Mammary epithelial cell (primary cell): ENCODE measurements at regions of chr12 and their contacts with region 1.

Region 1: DNA sequence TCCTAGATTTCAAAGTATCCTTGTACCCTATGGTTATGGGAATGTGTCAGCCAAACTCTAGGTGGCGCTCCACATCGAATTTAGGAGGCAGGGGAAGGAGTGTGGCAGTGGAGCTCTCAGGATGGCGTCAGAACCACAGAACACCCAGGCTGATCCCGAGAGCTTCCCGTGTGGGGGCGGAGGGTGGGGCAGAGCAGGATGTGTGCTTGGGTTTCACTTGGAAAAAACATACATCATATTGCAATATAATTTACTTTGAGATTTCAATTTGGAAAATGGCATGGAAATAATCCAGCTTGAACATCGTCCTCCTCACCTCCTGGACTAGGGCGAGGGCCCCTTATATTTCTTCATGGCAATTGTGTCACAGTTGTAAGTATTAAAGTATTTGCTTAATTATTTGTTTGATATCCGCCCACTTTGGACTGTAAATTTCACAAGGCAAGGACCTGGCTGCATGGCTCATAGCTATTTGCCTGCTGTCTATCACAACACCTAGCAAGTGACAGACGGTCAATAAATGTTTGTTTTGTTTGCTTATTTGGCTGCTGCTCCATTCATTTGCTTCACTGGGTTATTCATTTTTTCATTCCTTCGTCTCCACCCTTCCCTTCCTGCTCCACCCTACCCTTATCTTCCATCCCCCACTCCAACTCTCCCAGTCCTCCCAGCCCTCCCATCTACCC is 221.5 kb upstream of the HMGA2 start:
- DNase-seq: peak; percentile 94
- H3K4me3 ChIP-seq: peak overlapping the region; percentile 39 to 60 (median 43)
- H3K27ac ChIP-seq: peak overlapping the region; percentile 98
- H3K4me1 ChIP-seq: peaks cover 48% of the 10 kb centered on the region
- H3K27me3 ChIP-seq: no peaks in the 10 kb centered on the region
- CTCF ChIP-seq: peak; percentile 76 to 84

Region 2: GRCh38 chr12:65313719-65314317 is 288.9 kb before region 1 on chr12:
- CTCF ChIA-PET with region 1: no interaction called
- dilution Hi-C with region 1: no loop called
- in situ Hi-C with region 1: no loop called
- intact Hi-C with region 1: loop called (anchors 1 kb)
- DNase-seq: peak; percentile 19
- H3K4me3 ChIP-seq: no peak overlapping the region
- H3K27ac ChIP-seq: peak overlapping the region; percentile 2
- H3K4me1 ChIP-seq: peaks cover 3% of the 10 kb centered on the region
- H3K27me3 ChIP-seq: no peaks in the 10 kb centered on the region
- CTCF ChIP-seq: peak; percentile 59 to 67

Region 3: DNA sequence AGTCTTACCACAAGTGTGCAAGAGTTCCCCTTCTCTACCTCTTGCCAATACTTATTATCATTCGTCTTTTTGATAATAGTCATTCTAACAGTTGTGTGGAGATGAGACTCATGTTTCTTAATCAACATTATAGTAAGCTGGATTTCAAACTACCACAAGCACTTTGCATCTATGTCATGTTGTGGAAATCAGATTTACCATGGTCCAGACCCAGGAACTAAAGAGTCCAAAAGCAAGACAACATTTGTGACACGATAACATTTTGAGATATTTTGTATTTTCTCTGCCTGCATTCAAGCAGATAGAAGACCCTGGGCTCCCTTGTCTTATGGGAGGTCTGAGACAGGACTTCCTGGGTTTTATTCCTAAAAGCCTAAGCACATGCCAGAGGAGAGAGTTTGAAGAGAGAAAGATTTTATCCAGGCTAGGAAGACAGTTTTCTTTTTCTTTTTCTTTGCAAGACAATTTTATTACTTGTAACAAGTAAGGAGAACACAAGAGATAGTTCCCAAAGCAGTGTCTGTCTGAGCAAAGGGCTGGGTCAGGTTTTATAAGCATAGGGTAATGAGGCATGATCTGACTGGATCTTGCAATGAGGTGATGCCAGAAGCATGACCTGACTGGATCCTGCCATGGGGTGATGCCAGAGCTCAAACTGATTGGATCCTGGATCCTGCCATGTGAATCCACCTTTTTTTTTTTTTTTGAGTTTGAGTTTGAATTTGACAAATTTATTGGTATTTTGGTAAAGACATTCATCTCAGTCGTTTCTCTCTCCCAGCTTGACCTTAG is 41.0 kb after region 1 on chr12:
- CTCF ChIA-PET with region 1: interaction called, 5 read pairs
- dilution Hi-C with region 1: no loop called
- in situ Hi-C with region 1: no loop called
- intact Hi-C with region 1: loop called (anchors 1 kb)
- DNase-seq: peak; percentile 93
- H3K4me3 ChIP-seq: no peak overlapping the region
- H3K27ac ChIP-seq: peak overlapping the region; percentile 96
- H3K4me1 ChIP-seq: peaks cover 25% of the 10 kb centered on the region
- H3K27me3 ChIP-seq: no peaks in the 10 kb centered on the region
- CTCF ChIP-seq: no peak

Region 4: GRCh38 chr12:65673732-65674131 is 71.0 kb after region 1 on chr12:
- CTCF ChIA-PET with region 1: interaction called, 3 read pairs
- dilution Hi-C with region 1: loop called (anchors 10 kb)
- in situ Hi-C with region 1: loop called in 1 of 2 experiments (anchors 5 kb)
- intact Hi-C with region 1: loop called (anchors 1 kb)
- DNase-seq: no peak
- H3K4me3 ChIP-seq: no peak overlapping the region
- H3K27ac ChIP-seq: peak overlapping the region; percentile 98
- H3K4me1 ChIP-seq: peaks cover 55% of the 10 kb centered on the region
- H3K27me3 ChIP-seq: no peaks in the 10 kb centered on the region
- CTCF ChIP-seq: peak in 1 of 2 donors; percentile 46

Region 5: GRCh38 chr12:65740873-65741600 is 138.3 kb after region 1 on chr12:
- CTCF ChIA-PET with region 1: no interaction called
- dilution Hi-C with region 1: no loop called
- in situ Hi-C with region 1: no loop called
- intact Hi-C with region 1: loop called (anchors 2 kb)
- DNase-seq: peak; percentile 73
- H3K4me3 ChIP-seq: peak overlapping the region; percentile 54 to 90 (median 77)
- H3K27ac ChIP-seq: peak overlapping the region; percentile 49
- H3K4me1 ChIP-seq: peaks cover 14% of the 10 kb centered on the region
- H3K27me3 ChIP-seq: no peaks in the 10 kb centered on the region
- CTCF ChIP-seq: no peak

Region 6: DNA sequence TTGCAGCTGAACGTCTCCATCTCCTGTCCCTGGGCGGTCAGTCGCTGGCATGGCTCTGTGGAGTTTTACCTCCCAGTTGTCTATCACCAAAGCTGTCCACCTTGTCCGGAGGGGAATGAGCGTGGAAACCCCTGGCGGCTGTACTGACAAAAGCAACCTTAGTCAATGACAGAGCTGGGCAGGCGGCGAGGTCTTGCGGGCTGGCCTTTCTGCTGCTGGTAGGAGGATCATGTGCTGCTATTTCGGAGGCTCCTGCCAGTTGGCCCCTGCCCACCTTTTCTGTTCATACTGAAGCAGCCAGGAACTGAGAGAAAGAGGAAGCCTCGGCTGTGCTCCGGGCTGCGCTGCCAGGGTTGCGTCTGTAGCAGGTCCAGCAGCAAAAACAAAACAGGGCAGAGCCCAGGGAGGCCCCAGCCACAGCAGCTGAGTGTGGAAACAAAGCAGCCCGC is 279.2 kb after region 1 on chr12:
- CTCF ChIA-PET with region 1: interaction called, 3 read pairs
- dilution Hi-C with region 1: no loop called
- in situ Hi-C with region 1: no loop called
- intact Hi-C with region 1: loop called (anchors 1 kb)
- DNase-seq: no peak
- H3K4me3 ChIP-seq: no peak overlapping the region
- H3K27ac ChIP-seq: no peak overlapping the region
- H3K4me1 ChIP-seq: peaks cover 46% of the 10 kb centered on the region
- H3K27me3 ChIP-seq: no peaks in the 10 kb centered on the region
- CTCF ChIP-seq: peak in 1 of 2 donors; percentile 22

Region 7: GRCh38 chr12:66107451-66107915 is 504.7 kb after region 1 on chr12:
- CTCF ChIA-PET with region 1: no interaction called
- dilution Hi-C with region 1: no loop called
- in situ Hi-C with region 1: no loop called
- intact Hi-C with region 1: loop called (anchors 5 kb)
- DNase-seq: peak; percentile 91
- H3K4me3 ChIP-seq: no peak overlapping the region
- H3K27ac ChIP-seq: no peak overlapping the region
- H3K4me1 ChIP-seq: peaks cover 6% of the 10 kb centered on the region
- H3K27me3 ChIP-seq: no peaks in the 10 kb centered on the region
- CTCF ChIP-seq: peak; percentile 69 to 75